ENCODE measurements at regions of chr11 and their contacts with region 1.

Region 1: DNA sequence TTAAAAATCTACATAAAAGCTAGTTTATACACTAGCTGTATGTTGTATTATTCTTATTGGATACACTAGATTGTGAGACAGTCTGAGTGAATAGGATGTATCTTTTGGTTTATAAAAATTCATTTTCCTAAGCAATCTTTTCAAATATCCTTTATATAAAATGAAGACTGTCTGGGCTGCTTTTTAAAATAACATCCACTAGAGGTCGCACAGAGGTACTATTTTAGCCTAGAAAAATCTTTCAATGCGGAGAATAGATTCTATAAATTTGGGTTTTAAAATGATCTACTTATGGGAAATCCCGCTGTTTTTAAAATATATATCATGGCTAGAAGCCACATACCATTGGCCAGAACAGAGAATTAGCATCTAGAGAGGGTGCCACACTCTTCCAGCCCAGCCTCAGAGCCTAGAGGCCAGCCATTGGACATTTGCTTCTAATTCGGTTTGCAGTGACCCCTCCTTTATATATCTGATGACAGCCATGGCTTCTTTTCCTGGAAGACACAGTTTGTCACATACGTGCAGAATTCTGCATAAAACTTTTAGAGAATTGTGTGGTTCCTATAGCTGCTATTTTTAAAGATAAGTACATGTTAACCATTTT is 7.3 kb downstream of the C11orf97 start:
- DNase-seq: no peak
- ATAC-seq: no peak

Region 2: DNA sequence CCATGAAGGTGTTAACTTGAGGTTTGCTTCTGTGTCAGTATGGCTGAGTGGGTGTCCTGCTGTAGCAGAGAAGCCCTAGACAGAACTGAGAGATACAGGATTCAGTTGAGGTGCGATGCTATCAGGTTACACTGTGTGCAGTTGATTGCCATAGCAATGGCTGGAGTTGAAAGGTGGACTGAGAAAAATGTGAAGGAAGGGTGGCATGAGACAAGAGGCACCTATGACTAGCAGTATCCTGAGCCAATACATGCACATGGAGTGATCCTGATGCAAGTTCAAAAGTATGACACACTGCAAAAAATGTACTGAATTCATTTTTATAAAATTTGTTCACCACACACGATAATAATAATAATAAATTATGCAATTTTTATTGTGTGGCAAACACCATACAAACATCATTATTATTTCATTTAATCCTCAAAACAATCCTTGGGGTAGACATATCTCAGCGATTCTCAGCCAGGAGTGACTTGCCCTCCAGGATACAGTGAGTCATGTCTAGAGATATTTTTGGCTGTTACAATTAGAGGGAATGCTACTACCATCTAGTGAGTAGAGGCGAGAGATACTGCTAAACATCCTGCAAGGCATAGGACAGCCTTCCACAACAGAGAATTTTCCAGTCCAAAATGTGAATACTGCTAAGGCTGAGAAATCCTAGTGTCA is 43.7 kb after region 1 on chr11:
- intact Hi-C with region 1: loop called (anchors 2 kb)
- DNase-seq: no peak
- ATAC-seq: peak; percentile 90

Region 3: GRCh38 chr11:94602430-94603372 is 83.1 kb after region 1 on chr11:
- intact Hi-C with region 1: loop called (anchors 5 kb)
- DNase-seq: peak; percentile 70
- ATAC-seq: peak; percentile 64